Motor neuron (in vitro differentiated cells): ENCODE measurements at regions of chr17 and their contacts with region 1.

Region 1: GRCh38 chr17:57987580-57988421 is at the start of gene VEZF1:
- ATAC-seq: peak; percentile 57 to 73 (median 66)
- H3K4me3 ChIP-seq: peak within 1 kb of the TSS; percentile 75 to 92 (median 83)
- H3K27ac ChIP-seq: peak within 1 kb of the TSS; percentile 97 to 99
- H3K4me1 ChIP-seq: peaks cover 20 to 43% of the 10 kb centered on the region in 2 donors
- total RNA-seq, gene VEZF1: 14.0 to 87.6 (median 43.0) TPM

Region 2: DNA sequence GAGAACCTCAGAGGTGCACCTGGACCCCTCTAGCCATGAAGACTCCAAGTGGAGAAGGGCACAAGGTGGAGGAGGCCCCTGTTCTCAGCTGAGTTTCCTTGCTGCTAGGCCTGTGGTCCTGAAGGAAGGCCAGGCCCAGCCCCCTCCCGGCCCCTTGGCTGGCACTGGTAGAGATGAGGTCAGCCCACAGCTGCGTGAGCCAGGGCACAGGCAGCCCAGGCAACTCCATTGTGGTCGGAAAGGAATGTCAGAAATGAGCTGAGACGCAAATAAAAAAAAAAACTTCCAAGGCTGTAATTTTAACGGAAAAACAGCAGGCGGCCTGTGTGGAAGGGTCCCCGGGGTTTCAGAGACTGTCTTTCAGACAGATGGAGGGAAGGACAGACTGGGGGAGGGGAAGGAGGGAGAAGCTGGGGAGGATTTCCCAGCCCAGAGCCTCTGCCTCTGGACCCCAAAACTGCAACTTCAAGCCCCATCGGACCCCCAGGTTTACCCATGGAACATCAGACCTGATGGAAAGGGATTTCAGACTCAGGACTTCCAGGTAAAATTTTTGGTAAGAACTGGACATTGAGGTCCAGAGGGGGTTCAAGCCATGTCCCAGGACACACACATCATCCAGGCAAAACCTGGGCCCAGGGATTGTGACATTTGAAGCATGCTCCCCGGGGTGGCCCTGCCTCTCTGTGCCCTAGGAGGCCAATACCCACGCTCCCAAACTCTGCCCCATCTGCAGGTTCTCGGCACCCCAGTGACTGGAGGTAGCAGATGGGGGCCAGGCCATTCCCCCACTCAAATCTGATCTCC is 112.3 kb before region 1 on chr17:
- in situ Hi-C with region 1: loop called in 4 of 9 experiments (anchors 10 to 25 kb)
- ATAC-seq: peak; percentile 74 to 90 (median 78)
- H3K4me3 ChIP-seq: no peak overlapping the region
- H3K27ac ChIP-seq: peak overlapping the region; percentile 83 to 96
- H3K4me1 ChIP-seq: peaks cover 37 to 48% of the 10 kb centered on the region in 2 donors

Region 3: DNA sequence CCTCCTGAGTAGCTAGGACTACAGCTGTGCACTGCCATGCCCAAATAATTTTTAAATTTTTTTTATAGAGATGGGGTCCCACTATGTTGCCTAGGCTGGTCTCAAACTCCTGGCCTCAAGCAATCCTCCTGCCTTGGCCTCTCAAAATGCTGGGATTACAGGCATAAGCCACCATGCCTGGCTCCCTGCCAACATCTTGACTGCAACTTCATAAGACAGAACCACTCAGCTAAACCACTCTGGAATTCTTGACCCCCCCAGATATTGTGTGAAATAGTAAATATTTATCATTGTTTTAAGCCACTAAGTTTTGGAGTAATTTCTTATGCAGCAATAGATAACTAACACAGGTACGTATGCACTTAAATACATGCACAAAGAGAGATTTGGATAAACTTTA is 121.4 kb after region 1 on chr17:
- in situ Hi-C with region 1: no loop called
- ATAC-seq: no peak
- H3K4me3 ChIP-seq: no peak overlapping the region
- H3K27ac ChIP-seq: no peak overlapping the region
- H3K4me1 ChIP-seq: no peaks in the 10 kb centered on the region